WTC11 (cell line): ENCODE measurements at regions of chr12 and their contacts with region 1.

Region 1: GRCh38 chr12:91811481-91812287 is 334.0 kb downstream of the BTG1 start:
- DNase-seq: peak; percentile 71
- ATAC-seq: peak; percentile 57; the same call in 1 of the 2 replicates
- H3K4me3 Mint-ChIP-seq: no peak overlapping the region
- H3K27ac Mint-ChIP-seq: no peak overlapping the region
- H3K4me1 Mint-ChIP-seq: no peaks in the 10 kb centered on the region
- H3K27me3 Mint-ChIP-seq: no peaks in the 10 kb centered on the region
- CTCF ChIP-seq: peak; percentile 80

Region 2: GRCh38 chr12:91763654-91764370 is 47.9 kb before region 1 on chr12:
- CTCF ChIA-PET with region 1: no interaction called
- POLR2A ChIA-PET with region 1: no interaction called
- DNase-seq: no peak
- ATAC-seq: no peak
- H3K4me3 Mint-ChIP-seq: no peak overlapping the region
- H3K27ac Mint-ChIP-seq: no peak overlapping the region
- H3K4me1 Mint-ChIP-seq: no peaks in the 10 kb centered on the region
- H3K27me3 Mint-ChIP-seq: no peaks in the 10 kb centered on the region
- CTCF ChIP-seq: no peak

Region 3: GRCh38 chr12:91801048-91801447 is 10.6 kb before region 1 on chr12:
- CTCF ChIA-PET with region 1: interaction called, 10 read pairs
- POLR2A ChIA-PET with region 1: no interaction called
- DNase-seq: no peak
- ATAC-seq: no peak
- H3K4me3 Mint-ChIP-seq: no peak overlapping the region
- H3K27ac Mint-ChIP-seq: no peak overlapping the region
- H3K4me1 Mint-ChIP-seq: peaks cover 6% of the 10 kb centered on the region
- H3K27me3 Mint-ChIP-seq: no peaks in the 10 kb centered on the region
- CTCF ChIP-seq: no peak